HCT116 (cell line): ENCODE measurements at regions of chr2 and their contacts with region 1.

Region 1: DNA sequence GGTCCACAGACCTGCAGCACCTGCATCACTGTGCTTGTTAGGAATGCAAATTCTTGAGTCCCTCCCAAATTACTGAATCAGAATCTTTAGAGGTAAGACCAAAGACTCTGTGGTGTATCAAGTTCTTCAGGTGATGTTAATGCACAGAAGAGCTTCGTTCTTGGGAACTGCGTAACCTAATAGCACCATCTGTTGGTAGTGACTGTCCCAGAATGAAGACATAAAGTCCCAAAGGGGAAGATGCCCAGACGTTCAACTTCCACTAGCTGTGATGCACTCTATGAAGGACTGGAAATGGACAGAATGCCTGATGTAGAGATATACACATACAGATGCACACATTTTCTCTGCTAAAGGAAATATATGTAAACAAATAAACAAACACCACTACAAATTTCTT is 576.0 kb downstream of the LRP1B start:
- DNase-seq: peak; percentile 34
- ATAC-seq: peak; percentile 96
- H3K4me3 ChIP-seq: no peak overlapping the region
- H3K27ac ChIP-seq: no peak overlapping the region
- H3K4me1 ChIP-seq: no peaks in the 10 kb centered on the region
- H3K27me3 ChIP-seq: no peaks in the 10 kb centered on the region
- CTCF ChIP-seq: peak; percentile 35 to 69 (median 65); a peak in 5 of 6 replicates
- POLR2A ChIP-seq: no peak
- RAD21 ChIP-seq: peak; percentile 79

Region 2: DNA sequence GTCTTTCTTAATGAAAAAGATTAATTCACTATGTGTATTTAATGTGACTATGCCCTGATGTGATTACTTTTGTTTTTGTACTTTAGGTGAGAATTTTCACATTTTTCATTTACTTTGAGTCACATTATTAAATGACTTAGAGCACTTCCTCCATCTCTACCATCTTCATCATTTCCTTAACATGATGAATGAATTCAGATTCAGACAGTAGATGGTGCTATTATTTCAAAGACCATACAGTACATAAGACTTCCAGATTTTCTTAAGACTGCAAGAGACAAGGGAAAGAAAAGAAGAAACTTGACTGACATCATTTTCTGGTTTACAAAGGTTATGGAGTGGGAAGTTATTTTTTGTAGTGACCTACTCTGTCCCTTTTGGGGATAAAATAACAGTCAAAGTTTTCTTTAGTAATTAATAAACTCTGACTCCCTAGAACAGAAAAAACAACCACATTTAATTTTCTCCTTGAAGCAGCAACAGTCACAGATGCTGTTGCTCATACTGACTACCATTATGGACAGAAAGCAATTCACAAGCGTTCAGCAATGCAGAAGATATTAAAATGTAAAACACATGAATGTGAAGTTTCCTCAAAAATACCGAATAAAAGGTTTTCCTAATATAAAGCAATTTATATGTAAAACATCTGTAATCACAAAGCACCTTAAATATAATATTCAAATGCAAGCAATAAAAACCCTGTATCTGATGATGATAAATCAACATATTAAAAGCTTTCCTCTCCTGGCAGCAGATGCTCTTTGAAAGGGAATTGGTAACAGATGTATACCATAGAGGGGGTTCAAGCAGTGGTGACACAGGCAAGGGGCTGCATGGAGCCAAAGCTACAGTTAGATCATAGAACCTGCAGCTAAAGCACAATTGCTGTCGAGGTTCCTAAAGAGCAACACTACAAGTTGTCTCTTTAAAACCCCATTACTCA is 1763.7 kb before region 1 on chr2:
- CTCF ChIA-PET with region 1: no interaction called
- POLR2A ChIA-PET with region 1: no interaction called
- RAD21 ChIA-PET with region 1: no interaction called
- intact Hi-C with region 1: loop called (anchors 2 kb)
- DNase-seq: peak; percentile 29
- ATAC-seq: peak; percentile 66
- H3K4me3 ChIP-seq: no peak overlapping the region
- H3K27ac ChIP-seq: no peak overlapping the region
- H3K4me1 ChIP-seq: no peaks in the 10 kb centered on the region
- H3K27me3 ChIP-seq: no peaks in the 10 kb centered on the region
- CTCF ChIP-seq: peak; percentile 25 to 56 (median 44); a peak in 4 of 6 replicates
- POLR2A ChIP-seq: no peak
- RAD21 ChIP-seq: peak; percentile 74

Region 3: GRCh38 chr2:140085674-140086073 is 1469.1 kb before region 1 on chr2:
- CTCF ChIA-PET with region 1: interaction called, 4 read pairs
- POLR2A ChIA-PET with region 1: no interaction called
- RAD21 ChIA-PET with region 1: interaction called in 1 of 2 experiments, 3 read pairs
- intact Hi-C with region 1: loop called (anchors 10 kb)
- DNase-seq: no peak
- ATAC-seq: no peak
- H3K4me3 ChIP-seq: no peak overlapping the region
- H3K27ac ChIP-seq: no peak overlapping the region
- H3K4me1 ChIP-seq: no peaks in the 10 kb centered on the region
- H3K27me3 ChIP-seq: no peaks in the 10 kb centered on the region
- CTCF ChIP-seq: no peak; a peak in 1 of 6 replicates
- POLR2A ChIP-seq: no peak
- RAD21 ChIP-seq: peak; percentile 43

Region 4: GRCh38 chr2:141399270-141399669 is 155.5 kb before region 1 on chr2:
- CTCF ChIA-PET with region 1: no interaction called
- POLR2A ChIA-PET with region 1: no interaction called
- RAD21 ChIA-PET with region 1: no interaction called
- intact Hi-C with region 1: loop called (anchors 1 kb)
- DNase-seq: no peak
- ATAC-seq: peak; percentile 44; the same call in 1 of the 2 replicates
- H3K4me3 ChIP-seq: no peak overlapping the region
- H3K27ac ChIP-seq: no peak overlapping the region
- H3K4me1 ChIP-seq: no peaks in the 10 kb centered on the region
- H3K27me3 ChIP-seq: no peaks in the 10 kb centered on the region
- CTCF ChIP-seq: peak; percentile 7 to 58 (median 41); a peak in 4 of 6 replicates
- POLR2A ChIP-seq: no peak
- RAD21 ChIP-seq: peak; percentile 47

Region 5: DNA sequence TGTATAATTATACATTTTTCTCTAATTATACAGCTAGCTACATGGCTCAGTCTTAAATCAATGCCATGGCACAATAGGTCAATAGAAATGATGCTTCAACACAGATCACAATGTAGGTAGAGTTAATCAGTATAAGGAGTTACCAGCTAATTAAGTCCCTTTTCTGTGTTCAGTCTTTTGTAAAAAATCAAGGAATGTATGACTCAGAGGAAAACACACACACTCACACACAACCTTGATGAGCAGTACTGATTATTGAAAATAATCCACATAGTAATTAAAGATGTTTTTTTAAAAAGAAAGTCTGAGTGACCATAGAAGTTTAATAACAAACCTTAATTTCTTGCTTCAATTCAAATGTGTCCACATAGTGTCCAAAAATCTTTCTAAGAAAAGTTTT is 115.3 kb before region 1 on chr2:
- CTCF ChIA-PET with region 1: no interaction called
- POLR2A ChIA-PET with region 1: no interaction called
- RAD21 ChIA-PET with region 1: no interaction called
- intact Hi-C with region 1: no loop called
- DNase-seq: no peak
- ATAC-seq: no peak
- H3K4me3 ChIP-seq: no peak overlapping the region
- H3K27ac ChIP-seq: no peak overlapping the region
- H3K4me1 ChIP-seq: no peaks in the 10 kb centered on the region
- H3K27me3 ChIP-seq: no peaks in the 10 kb centered on the region
- CTCF ChIP-seq: no peak
- POLR2A ChIP-seq: no peak
- RAD21 ChIP-seq: no peak

Region 6: DNA sequence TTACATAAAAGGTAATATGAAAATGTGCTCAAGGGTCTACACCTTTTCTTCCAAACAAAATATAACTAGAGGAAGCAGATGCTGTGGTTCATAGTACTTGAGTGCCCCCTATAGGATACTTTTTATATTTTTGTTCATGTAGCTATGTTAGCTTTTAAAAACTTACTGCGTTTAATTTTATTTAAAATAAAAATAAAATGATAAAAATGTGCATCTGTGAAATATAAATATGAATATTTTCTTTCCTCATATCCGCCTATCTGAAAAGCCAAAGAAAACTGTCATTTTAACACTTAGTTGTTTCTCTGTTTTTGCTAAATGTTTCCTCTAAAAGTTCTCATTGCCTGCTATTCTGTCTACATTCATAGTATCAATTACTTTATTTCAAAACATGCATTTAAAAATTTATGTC is 585.6 kb after region 1 on chr2:
- CTCF ChIA-PET with region 1: interaction called, 10 read pairs
- POLR2A ChIA-PET with region 1: no interaction called
- RAD21 ChIA-PET with region 1: interaction called in 1 of 2 experiments, 3 read pairs
- intact Hi-C with region 1: no loop called
- DNase-seq: peak; percentile 19
- ATAC-seq: peak; percentile 58; the same call in 1 of the 2 replicates
- H3K4me3 ChIP-seq: no peak overlapping the region
- H3K27ac ChIP-seq: no peak overlapping the region
- H3K4me1 ChIP-seq: no peaks in the 10 kb centered on the region
- H3K27me3 ChIP-seq: no peaks in the 10 kb centered on the region
- CTCF ChIP-seq: peak; percentile 37 to 62 (median 44); a peak in 4 of 6 replicates
- POLR2A ChIP-seq: no peak
- RAD21 ChIP-seq: peak; percentile 77